ENCODE measurements at regions of chr7 and their contacts with region 1.

Region 1: DNA sequence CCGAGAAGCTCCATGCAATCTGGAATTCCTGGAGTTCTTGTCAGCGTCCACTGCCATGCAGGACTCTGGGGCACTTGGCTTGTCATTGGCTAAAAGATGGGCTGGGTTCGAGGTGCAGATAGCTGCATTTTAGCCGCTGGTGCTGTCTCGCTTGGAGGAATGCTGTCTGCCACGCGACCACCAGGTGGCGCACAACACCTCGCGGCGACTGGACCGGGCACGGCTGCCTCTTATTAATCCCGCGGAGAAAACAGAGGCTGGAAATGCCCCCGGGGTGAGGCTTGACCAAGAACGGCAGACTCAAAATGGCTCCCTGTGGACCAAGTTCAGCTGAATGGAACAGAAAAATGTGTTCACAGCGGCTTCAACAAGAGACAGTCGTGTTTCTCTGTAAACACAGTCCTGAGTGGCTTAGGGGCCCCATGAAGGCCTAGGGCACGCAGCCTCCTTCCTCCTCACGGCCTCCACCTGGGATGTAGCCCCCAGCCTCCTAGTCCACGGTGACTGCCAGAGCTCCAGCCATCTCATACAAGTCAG is 46.2 kb downstream of the AOC1 start:
- DNase-seq: peak; percentile 82
- H3K4me3 Mint-ChIP-seq: no peak overlapping the region
- H3K27ac Mint-ChIP-seq: no peak overlapping the region
- H3K4me1 Mint-ChIP-seq: peaks cover 3% of the 10 kb centered on the region
- H3K27me3 Mint-ChIP-seq: peaks cover 76% of the 10 kb centered on the region

Region 2: DNA sequence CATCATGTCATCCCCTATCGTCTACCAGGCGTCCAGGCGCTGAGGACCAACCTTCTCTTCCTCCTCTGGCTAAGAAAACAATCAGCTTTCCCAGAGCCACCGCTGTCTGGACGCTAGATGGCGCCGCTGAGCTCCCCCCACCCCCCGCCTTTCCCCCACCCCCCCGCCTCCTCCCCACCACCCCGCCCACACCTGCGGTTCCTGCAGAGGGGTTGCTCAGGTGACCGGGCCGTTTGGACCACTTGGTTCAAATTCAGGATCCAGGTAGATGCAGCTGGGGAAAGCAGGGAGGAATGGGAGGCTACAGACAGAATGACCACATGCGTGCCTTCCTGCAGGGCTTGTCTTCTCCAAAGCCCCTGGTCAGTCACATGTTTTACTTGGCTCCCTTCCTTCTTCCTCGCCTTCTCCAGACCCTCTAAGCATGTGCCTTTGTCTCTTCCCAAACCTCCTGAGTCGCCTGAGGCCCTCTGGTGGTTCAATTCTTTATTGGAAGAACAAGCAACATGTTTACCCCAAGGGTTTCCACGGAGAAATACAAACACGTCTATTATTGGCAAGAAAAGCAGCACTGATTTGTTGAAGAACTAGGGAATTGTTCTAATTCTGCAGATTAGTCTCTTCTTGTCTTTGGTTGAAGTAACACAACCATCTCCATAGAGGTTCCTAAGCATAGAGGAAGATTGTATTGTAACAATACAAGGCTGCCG is 21.6 kb before region 1 on chr7:
- CTCF ChIA-PET with region 1: interaction called, 27 read pairs
- DNase-seq: peak; percentile 56
- H3K4me3 Mint-ChIP-seq: no peak overlapping the region
- H3K27ac Mint-ChIP-seq: no peak overlapping the region
- H3K4me1 Mint-ChIP-seq: peaks cover 5% of the 10 kb centered on the region
- H3K27me3 Mint-ChIP-seq: peaks cover 48% of the 10 kb centered on the region

Region 3: GRCh38 chr7:150919160-150919559 is 20.6 kb after region 1 on chr7:
- CTCF ChIA-PET with region 1: interaction called, 11 read pairs
- DNase-seq: no peak
- H3K4me3 Mint-ChIP-seq: no peak overlapping the region
- H3K27ac Mint-ChIP-seq: no peak overlapping the region
- H3K4me1 Mint-ChIP-seq: peaks cover 14% of the 10 kb centered on the region
- H3K27me3 Mint-ChIP-seq: peaks cover 71% of the 10 kb centered on the region

Region 4: GRCh38 chr7:150980663-150981062 is 82.1 kb after region 1 on chr7:
- CTCF ChIA-PET with region 1: interaction called, 42 read pairs
- DNase-seq: no peak
- H3K4me3 Mint-ChIP-seq: no peak overlapping the region
- H3K27ac Mint-ChIP-seq: no peak overlapping the region
- H3K4me1 Mint-ChIP-seq: peaks cover 24% of the 10 kb centered on the region
- H3K27me3 Mint-ChIP-seq: peaks cover 92% of the 10 kb centered on the region

Region 5: GRCh38 chr7:151110941-151111645 is 212.6 kb after region 1 on chr7:
- CTCF ChIA-PET with region 1: interaction called, 10 read pairs
- DNase-seq: peak; percentile 85
- H3K4me3 Mint-ChIP-seq: no peak overlapping the region
- H3K27ac Mint-ChIP-seq: peak overlapping the region; percentile 45
- H3K4me1 Mint-ChIP-seq: peaks cover 8% of the 10 kb centered on the region
- H3K27me3 Mint-ChIP-seq: peaks cover 51% of the 10 kb centered on the region

Measured in activated naive CD4-positive, alpha-beta T cell treated with anti-CD3 and anti-CD28 coated beads, Interleukin-2, amount 10 ng/mL, durations not matched to agents 7 days and 5 days (primary cell).